ENCODE measurements at regions of chr7 and their contacts with region 1.

Region 1: GRCh38 chr7:115429918-115430317 is 508.0 kb downstream of the MDFIC start:
- DNase-seq: no peak
- H3K4me3 ChIP-seq: no peak overlapping the region
- H3K27ac ChIP-seq: no peak overlapping the region
- H3K4me1 ChIP-seq: no peaks in the 10 kb centered on the region
- CTCF ChIP-seq: no peak

Region 2: GRCh38 chr7:115369008-115369407 is 60.9 kb before region 1 on chr7:
- CTCF ChIA-PET with region 1: no interaction called
- POLR2A ChIA-PET with region 1: interaction called, 3 read pairs
- intact Hi-C with region 1: loop called (anchors 10 kb)
- DNase-seq: no peak
- H3K4me3 ChIP-seq: no peak overlapping the region
- H3K27ac ChIP-seq: no peak overlapping the region
- H3K4me1 ChIP-seq: no peaks in the 10 kb centered on the region
- CTCF ChIP-seq: no peak

Measured in OCI-LY7 (cell line).